PC-9 (cell line): ENCODE measurements at regions of chr2 and their contacts with region 1.

Region 1: DNA sequence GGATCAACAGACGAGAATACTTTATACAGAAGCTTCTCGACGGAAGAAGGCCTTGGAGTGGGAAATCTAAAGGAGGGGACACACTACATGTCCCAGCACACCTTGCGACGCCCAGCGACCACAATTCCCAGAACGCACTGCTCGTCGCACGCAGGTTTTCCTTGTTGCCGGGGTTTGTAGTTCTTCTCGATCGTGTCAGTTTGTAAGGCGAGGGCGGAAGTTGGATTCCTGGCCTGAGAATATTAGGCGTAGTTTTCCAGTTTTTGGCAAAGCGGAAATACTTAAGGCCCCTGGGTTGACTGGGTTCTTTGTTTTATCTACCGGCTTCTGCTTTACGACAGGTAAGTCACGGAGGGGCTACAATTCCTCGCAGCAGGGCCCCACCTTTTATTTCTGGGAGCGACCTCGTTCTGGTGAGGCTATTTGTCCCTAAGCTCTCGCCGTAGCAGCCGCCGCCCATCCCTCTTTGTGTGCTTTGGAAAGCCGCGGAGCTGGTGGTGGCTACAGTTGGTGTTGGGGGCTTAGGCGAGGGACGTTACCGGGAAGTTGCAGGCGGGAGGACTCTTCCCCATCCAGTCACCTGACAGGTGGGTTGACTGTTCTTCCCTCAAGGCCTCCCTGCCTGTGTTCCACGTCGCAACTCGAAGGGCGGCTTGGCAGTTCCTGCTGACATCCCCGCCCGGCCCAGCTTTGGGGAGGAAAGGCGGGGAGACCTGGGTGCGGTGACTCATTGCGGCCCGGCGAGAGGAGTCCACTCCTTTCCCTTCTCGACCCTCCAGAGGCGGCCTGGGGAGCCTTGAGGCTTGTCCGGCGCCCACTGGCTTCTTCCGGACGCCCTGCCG is at the start of gene DYNC1I2:
- DNase-seq: peak; percentile 95 to 96
- H3K4me3 ChIP-seq: peak within 1 kb of the TSS; percentile 65
- H3K27ac ChIP-seq: peak within 1 kb of the TSS; percentile 65
- H3K4me1 ChIP-seq: peaks cover 11% of the 10 kb centered on the region
- H3K27me3 ChIP-seq: 0 out of 2 replicates have a peak, but pooled peaks cover 4% of the 10 kb centered on the region
- CTCF ChIP-seq: no peak
- total RNA-seq, gene DYNC1I2: 140 and 151 TPM in 2 replicates

Region 2: DNA sequence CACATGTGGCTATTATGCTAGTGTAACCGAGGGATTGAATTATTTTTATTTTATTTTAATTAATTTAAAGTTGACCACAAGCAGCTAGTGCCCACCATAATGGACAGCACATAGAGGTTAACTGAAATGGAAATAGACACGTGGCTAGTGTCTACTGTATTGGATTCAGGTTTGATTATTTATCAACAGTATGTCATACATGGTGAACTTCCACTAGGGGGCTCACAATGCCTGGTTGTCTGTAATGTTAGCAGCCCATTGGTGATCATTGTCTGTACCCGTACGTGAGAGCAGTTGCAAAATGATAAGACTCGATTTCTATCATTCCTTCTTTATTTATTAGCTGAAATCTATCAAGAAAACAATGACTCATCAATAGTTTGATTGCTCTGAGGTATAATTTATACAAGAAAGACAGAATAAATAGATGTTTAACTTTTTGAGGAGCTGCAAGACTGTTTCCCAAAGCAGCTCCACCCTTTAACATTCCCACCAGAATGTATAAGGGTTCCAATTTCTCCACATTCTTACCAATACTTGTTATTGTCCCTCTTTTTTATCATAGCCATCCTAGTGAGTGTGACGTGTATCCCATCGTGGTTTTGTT is 88.7 kb before region 1 on chr2:
- CTCF ChIA-PET with region 1: no interaction called
- POLR2A ChIA-PET with region 1: no interaction called
- intact Hi-C with region 1: loop called (anchors 5 kb)
- DNase-seq: peak; percentile 47 to 63
- H3K4me3 ChIP-seq: no peak overlapping the region
- H3K27ac ChIP-seq: no peak overlapping the region
- H3K4me1 ChIP-seq: no peaks in the 10 kb centered on the region
- H3K27me3 ChIP-seq: peaks cover 17% of the 10 kb centered on the region; the same call in 1 of the 2 replicates
- CTCF ChIP-seq: peak; percentile 100

Region 3: DNA sequence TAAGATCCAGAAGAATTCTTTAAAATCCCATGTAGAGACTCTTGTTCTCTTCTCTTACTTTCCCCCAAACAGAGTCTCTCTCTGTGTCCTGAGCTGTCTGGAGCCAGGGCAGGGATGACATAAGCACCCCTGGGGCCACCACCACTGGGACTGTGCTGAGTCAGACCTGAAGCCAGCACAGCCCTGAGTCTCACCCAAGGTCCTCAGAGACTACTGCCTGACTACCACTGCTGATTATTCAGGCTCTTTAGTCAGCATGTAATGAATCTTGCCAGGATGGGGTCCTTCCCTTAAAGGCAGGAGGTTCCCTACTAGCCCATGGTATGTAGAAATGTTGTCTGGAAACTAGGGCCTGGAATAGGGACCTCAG is 35.1 kb before region 1 on chr2:
- CTCF ChIA-PET with region 1: interaction called, 12 read pairs
- POLR2A ChIA-PET with region 1: no interaction called
- intact Hi-C with region 1: no loop called
- DNase-seq: no peak
- H3K4me3 ChIP-seq: no peak overlapping the region
- H3K27ac ChIP-seq: no peak overlapping the region
- H3K4me1 ChIP-seq: no peaks in the 10 kb centered on the region
- H3K27me3 ChIP-seq: peaks cover 24% of the 10 kb centered on the region
- CTCF ChIP-seq: no peak

Region 4: GRCh38 chr2:172153156-172153555 is 465.6 kb after region 1 on chr2:
- CTCF ChIA-PET with region 1: no interaction called
- POLR2A ChIA-PET with region 1: no interaction called
- intact Hi-C with region 1: no loop called
- DNase-seq: no peak
- H3K4me3 ChIP-seq: no peak overlapping the region
- H3K27ac ChIP-seq: no peak overlapping the region
- H3K4me1 ChIP-seq: no peaks in the 10 kb centered on the region
- H3K27me3 ChIP-seq: 0 out of 2 replicates have a peak, but pooled peaks cover 3% of the 10 kb centered on the region
- CTCF ChIP-seq: no peak